ENCODE measurements at regions of chr4 and their contacts with region 1.

Region 1: DNA sequence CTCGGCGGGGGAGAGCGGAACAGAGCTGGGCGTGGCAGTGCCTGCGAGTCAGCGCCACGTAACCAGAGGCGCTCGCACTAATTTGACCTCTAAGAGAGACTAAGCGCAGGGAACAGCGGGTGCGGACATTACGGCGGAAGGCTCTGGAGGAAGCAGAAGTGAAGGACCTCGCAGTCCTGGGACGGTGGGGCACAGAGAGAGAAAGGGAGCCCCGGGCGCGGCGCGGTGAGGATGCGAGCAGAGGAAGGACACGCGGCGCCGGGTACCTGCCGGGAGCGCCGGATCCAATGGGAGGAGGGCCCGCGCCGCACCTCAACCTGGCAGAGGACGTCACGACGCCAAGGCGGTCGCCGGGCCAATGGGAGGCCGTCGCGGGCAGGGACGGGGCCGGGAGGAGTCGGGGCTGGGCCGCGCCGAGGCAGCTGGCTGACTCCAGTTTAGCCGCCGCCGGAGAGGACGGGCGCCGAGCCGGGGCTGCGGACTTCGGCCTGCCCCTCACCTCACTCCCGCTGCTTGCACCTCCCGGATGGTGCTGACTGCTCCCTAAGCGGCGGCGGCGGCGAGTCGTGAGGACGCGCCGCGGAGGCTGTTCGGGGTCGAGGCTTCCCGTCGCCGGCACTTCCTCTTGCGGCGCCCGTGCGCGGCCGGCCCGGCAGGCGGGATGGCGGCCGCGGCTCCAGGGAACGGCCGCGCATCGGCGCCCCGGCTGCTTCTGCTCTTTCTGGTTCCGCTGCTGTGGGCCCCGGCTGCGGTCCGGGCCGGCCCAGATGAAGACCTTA is at the start of gene TMEM165:
- DNase-seq: peak; percentile 88 to 92 (median 90)
- H3K4me3 ChIP-seq: peak within 1 kb of the TSS; percentile 74 to 75
- H3K4me3 Mint-ChIP-seq: peak within 1 kb of the TSS; percentile 92 to 98 (median 96)
- H3K27ac ChIP-seq: peak within 1 kb of the TSS; percentile 84
- H3K27ac Mint-ChIP-seq: peak within 1 kb of the TSS; percentile 93 to 99 (median 98)
- H3K4me1 ChIP-seq: peaks cover 39% of the 10 kb centered on the region
- H3K4me1 Mint-ChIP-seq: peaks cover 30 to 48% (median 38%) of the 10 kb centered on the region in 4 donors
- H3K27me3 ChIP-seq: no peaks in the 10 kb centered on the region
- H3K27me3 Mint-ChIP-seq: no peaks in the 10 kb centered on the region
- total RNA-seq, gene TMEM165: 61.8 to 74.8 TPM

Region 2: DNA sequence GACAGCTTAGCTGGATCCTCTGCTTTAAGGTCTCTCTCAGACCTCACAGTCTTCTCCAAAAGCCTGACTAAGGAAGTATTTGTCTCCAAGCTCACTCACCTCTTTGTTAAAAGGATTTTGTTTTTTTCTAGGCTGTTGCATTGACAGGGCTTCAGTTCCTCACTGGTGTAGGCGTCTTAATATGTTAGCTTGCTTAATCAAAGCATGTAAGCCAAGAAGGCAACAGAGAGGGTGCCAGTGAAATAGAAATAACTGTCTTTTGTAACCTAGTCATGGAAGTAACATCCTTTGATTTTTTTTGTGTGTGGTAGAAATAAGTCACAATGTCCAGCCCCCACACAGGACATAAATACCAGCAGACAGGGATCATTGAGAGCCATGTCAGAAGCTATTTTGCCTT is 1959.5 kb before region 1 on chr4:
- CTCF ChIA-PET with region 1: no interaction called
- POLR2A ChIA-PET with region 1: no interaction called
- intact Hi-C with region 1: loop called (anchors 5 kb)
- DNase-seq: no peak
- H3K4me3 ChIP-seq: no peak overlapping the region
- H3K4me3 Mint-ChIP-seq: no peak overlapping the region
- H3K27ac ChIP-seq: no peak overlapping the region
- H3K27ac Mint-ChIP-seq: peak overlapping the region in 3 of 7 donors; percentile 14 to 25 (median 15)
- H3K4me1 ChIP-seq: no peaks in the 10 kb centered on the region
- H3K4me1 Mint-ChIP-seq: peaks cover 7 to 24% (median 13%) of the 10 kb centered on the region in 4 donors
- H3K27me3 ChIP-seq: no peaks in the 10 kb centered on the region
- H3K27me3 Mint-ChIP-seq: no peaks in the 10 kb centered on the region

Region 3: DNA sequence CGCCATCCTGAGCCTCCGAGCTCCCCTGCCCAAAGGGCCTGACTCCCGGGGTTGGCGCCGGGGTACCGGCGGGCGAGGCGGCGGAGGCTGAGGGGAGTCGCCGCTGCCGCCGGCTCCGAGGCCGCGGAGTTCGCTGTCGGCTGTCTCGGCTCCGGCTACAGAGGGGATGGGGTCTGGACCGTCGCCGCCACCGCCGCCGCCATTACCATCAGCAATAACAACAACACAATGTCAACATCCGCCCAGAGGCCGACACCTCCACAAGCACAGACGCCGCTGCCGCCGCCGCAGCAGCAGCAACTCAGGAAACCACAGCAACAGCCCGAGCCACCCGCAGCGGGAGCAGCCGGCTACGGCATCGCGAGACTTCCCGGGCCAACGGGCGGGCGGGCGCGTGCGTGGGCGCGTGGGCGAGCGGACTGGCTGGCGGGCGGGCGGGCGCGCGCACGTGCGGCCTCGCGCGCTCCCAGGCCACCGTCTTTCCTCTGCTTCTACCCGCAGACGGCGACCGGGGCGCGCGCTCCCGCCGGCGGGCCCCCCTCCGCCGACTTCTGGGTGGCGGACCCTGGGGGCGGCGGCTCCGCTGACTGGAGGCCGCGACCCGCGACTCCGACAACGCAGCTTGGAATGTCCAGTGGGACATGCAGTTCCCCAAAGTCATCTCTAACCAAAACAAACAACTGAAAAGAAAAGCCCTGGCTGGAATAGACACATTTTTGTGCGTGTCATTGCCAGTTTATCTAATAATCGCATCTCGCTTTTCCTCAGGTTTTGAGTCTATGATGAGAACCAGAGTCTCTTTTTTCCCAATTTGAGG is 1331.2 kb before region 1 on chr4 and contains the start of gene CHIC2:
- CTCF ChIA-PET with region 1: no interaction called
- POLR2A ChIA-PET with region 1: no interaction called
- intact Hi-C with region 1: loop called (anchors 5 kb)
- DNase-seq: peak; percentile 96 to 99 (median 98)
- H3K4me3 ChIP-seq: peak within 1 kb of the TSS; percentile 87 to 88
- H3K4me3 Mint-ChIP-seq: peak within 1 kb of the TSS; percentile 90 to 99 (median 96)
- H3K27ac ChIP-seq: peak within 1 kb of the TSS; percentile 98
- H3K27ac Mint-ChIP-seq: peak within 1 kb of the TSS; percentile 94 to 99 (median 98)
- H3K4me1 ChIP-seq: peaks cover 47% of the 10 kb centered on the region
- H3K4me1 Mint-ChIP-seq: peaks cover 35 to 62% (median 45%) of the 10 kb centered on the region in 4 donors
- H3K27me3 ChIP-seq: no peaks in the 10 kb centered on the region
- H3K27me3 Mint-ChIP-seq: no peaks in the 10 kb centered on the region
- total RNA-seq, gene CHIC2: 45.3 to 46.6 TPM

Region 4: GRCh38 chr4:54359919-54360650 is 1035.6 kb before region 1 on chr4:
- CTCF ChIA-PET with region 1: no interaction called
- POLR2A ChIA-PET with region 1: no interaction called
- intact Hi-C with region 1: no loop called
- DNase-seq: no peak
- H3K4me3 ChIP-seq: no peak overlapping the region
- H3K4me3 Mint-ChIP-seq: no peak overlapping the region
- H3K27ac ChIP-seq: no peak overlapping the region
- H3K27ac Mint-ChIP-seq: no peak overlapping the region
- H3K4me1 ChIP-seq: no peaks in the 10 kb centered on the region
- H3K4me1 Mint-ChIP-seq: no peaks in the 10 kb centered on the region
- H3K27me3 ChIP-seq: no peaks in the 10 kb centered on the region
- H3K27me3 Mint-ChIP-seq: peaks cover 3 to 9% of the 10 kb centered on the region in 2 donors

Region 5: GRCh38 chr4:54941994-54942552 is 453.6 kb before region 1 on chr4:
- CTCF ChIA-PET with region 1: no interaction called
- POLR2A ChIA-PET with region 1: no interaction called
- intact Hi-C with region 1: loop called (anchors 5 kb)
- DNase-seq: peak; percentile 62 to 80 (median 68)
- H3K4me3 ChIP-seq: peak overlapping the region in 1 of 2 donors; percentile 6
- H3K4me3 Mint-ChIP-seq: peak overlapping the region; percentile 58 to 83 (median 78)
- H3K27ac ChIP-seq: peak overlapping the region; percentile 49
- H3K27ac Mint-ChIP-seq: peak overlapping the region; percentile 86 to 96 (median 93)
- H3K4me1 ChIP-seq: peaks cover 28% of the 10 kb centered on the region
- H3K4me1 Mint-ChIP-seq: peaks cover 31 to 74% (median 50%) of the 10 kb centered on the region in 4 donors
- H3K27me3 ChIP-seq: no peaks in the 10 kb centered on the region
- H3K27me3 Mint-ChIP-seq: peaks cover 0 to 1% of the 10 kb centered on the region in 2 donors

Region 6: GRCh38 chr4:55554453-55555030 is 158.8 kb after region 1 on chr4:
- CTCF ChIA-PET with region 1: interaction called, 9 read pairs
- POLR2A ChIA-PET with region 1: interaction called, 3 read pairs
- intact Hi-C with region 1: loop called (anchors 2 kb)
- DNase-seq: peak in 4 of 5 donors; percentile 36 to 48 (median 41)
- H3K4me3 ChIP-seq: no peak overlapping the region
- H3K4me3 Mint-ChIP-seq: no peak overlapping the region
- H3K27ac ChIP-seq: no peak overlapping the region
- H3K27ac Mint-ChIP-seq: no peak overlapping the region
- H3K4me1 ChIP-seq: peaks cover 9% of the 10 kb centered on the region
- H3K4me1 Mint-ChIP-seq: peaks cover 3 to 19% (median 8%) of the 10 kb centered on the region in 4 donors
- H3K27me3 ChIP-seq: no peaks in the 10 kb centered on the region
- H3K27me3 Mint-ChIP-seq: peaks cover 6 to 9% of the 10 kb centered on the region in 2 donors

Region 7: GRCh38 chr4:55853484-55854046 is 457.8 kb after region 1 on chr4 and contains the start of gene EXOC1:
- CTCF ChIA-PET with region 1: interaction called, 3 read pairs
- POLR2A ChIA-PET with region 1: interaction called, 7 read pairs
- intact Hi-C with region 1: loop called (anchors 1 kb)
- DNase-seq: peak; percentile 93 to 96 (median 93)
- H3K4me3 ChIP-seq: peak within 1 kb of the TSS; percentile 83 to 97
- H3K4me3 Mint-ChIP-seq: peak within 1 kb of the TSS in 4 of 8 donors; percentile 40 to 67 (median 46)
- H3K27ac ChIP-seq: peak within 1 kb of the TSS; percentile 81
- H3K27ac Mint-ChIP-seq: peak within 1 kb of the TSS in 5 of 7 donors; percentile 36 to 96 (median 84)
- H3K4me1 ChIP-seq: peaks cover 44% of the 10 kb centered on the region
- H3K4me1 Mint-ChIP-seq: peaks cover 30 to 47% (median 38%) of the 10 kb centered on the region in 4 donors
- H3K27me3 ChIP-seq: no peaks in the 10 kb centered on the region
- H3K27me3 Mint-ChIP-seq: no peaks in the 10 kb centered on the region
- total RNA-seq, gene EXOC1: 41.9 to 50.7 TPM

Region 8: GRCh38 chr4:56907489-56908205 is 1511.9 kb after region 1 on chr4 and contains the start of gene REST:
- CTCF ChIA-PET with region 1: no interaction called
- POLR2A ChIA-PET with region 1: no interaction called
- intact Hi-C with region 1: loop called (anchors 5 kb)
- DNase-seq: peak; percentile 80 to 91 (median 86)
- H3K4me3 ChIP-seq: peak within 1 kb of the TSS; percentile 58 to 79
- H3K4me3 Mint-ChIP-seq: peak within 1 kb of the TSS; percentile 89 to 97 (median 93)
- H3K27ac ChIP-seq: peak within 1 kb of the TSS; percentile 85
- H3K27ac Mint-ChIP-seq: peak within 1 kb of the TSS; percentile 87 to 97 (median 93)
- H3K4me1 ChIP-seq: peaks cover 42% of the 10 kb centered on the region
- H3K4me1 Mint-ChIP-seq: peaks cover 30 to 54% (median 43%) of the 10 kb centered on the region in 4 donors
- H3K27me3 ChIP-seq: no peaks in the 10 kb centered on the region
- H3K27me3 Mint-ChIP-seq: no peaks in the 10 kb centered on the region
- total RNA-seq, gene REST: 77.3 to 79.2 TPM